ENCODE measurements at regions of chr3 and their contacts with region 1.

Region 1: DNA sequence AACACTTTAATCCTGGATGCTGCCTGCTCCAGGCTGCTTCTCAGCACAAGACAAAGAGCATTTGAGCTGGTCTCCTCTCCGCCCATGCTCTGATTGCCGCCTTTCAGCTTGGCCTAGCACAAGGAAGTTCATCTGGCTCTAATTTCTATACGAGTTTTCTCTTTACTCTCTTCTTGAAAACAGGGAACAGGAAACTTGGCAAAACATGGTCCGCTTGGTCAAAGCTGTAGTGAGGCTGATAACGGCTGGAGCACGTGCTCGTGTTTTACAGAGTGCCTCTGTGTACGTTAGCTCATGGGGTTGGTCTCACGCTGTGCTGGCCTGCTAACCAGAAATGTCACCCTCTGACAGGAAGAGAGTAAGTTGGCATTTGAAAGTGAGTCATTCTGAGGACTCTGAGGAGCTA is 19.2 kb downstream of the RARRES1 start:
- DNase-seq: peak; percentile 36

Region 2: DNA sequence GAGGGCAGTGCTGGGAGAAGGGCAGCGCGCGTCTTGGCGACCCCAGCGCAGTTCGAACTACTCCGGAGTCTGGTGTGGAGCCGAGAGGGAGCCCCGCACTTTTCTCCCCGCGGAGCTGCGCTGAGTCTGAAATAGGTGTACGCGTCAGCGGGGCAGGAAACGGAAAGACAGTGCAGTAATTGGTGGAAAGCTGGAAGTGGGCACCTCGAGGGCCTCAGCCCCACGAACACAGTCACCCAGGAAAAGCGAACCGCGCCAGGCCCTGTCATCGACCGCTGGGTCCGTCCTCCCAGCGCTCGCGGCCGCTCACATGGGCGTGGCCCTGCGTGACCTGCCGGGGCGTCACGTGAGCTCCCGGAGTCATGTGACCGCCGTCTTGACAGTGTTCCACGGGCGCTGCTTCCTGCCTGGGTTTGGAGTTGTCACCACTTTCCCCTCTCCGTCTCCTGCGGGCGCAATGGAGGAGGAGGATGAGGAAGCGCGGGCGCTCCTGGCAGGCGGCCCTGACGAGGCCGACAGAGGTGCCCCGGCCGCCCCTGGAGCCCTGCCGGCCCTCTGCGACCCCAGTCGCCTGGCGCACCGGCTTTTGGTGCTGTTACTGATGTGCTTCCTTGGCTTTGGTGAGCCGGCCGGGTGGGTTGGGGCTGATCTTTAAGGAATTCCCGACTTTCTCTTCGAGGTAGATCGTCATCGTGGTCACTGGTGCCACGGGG is 88.8 kb after region 1 on chr3 and contains the start of gene MFSD1:
- in situ Hi-C with region 1: loop called (anchors 10 kb)
- DNase-seq: peak; percentile 90
- total RNA-seq, gene MFSD1: 42.5 and 58.7 TPM in 2 replicates

Measured in G401 (cell line).